ENCODE measurements at regions of chr6 and their contacts with region 1.

Region 1: GRCh38 chr6:41602864-41603608 is 35.2 kb upstream of the MDFI start:
- DNase-seq: peak; percentile 90
- ATAC-seq: peak; percentile 85

Region 2: GRCh38 chr6:41683510-41684310 is 80.7 kb after region 1 on chr6:
- intact Hi-C with region 1: loop called (anchors 5 kb)
- DNase-seq: peak; percentile 90
- ATAC-seq: peak; percentile 91

Region 3: GRCh38 chr6:43376551-43376981 is 1773.5 kb after region 1 on chr6:
- intact Hi-C with region 1: loop called (anchors 5 kb)
- DNase-seq: no peak
- ATAC-seq: no peak

Measured in sciatic nerve (tissue), 2 donors.